ENCODE measurements at regions of chr10 and their contacts with region 1.

Region 1: GRCh38 chr10:130110246-130111112 is at the start of gene C10orf143:
- DNase-seq: peak; percentile 97
- H3K4me3 ChIP-seq: peak within 1 kb of the TSS; percentile 74
- H3K27ac ChIP-seq: peak within 1 kb of the TSS; percentile 95
- H3K4me1 ChIP-seq: peaks cover 8% of the 10 kb centered on the region
- H3K27me3 ChIP-seq: no peaks in the 10 kb centered on the region
- CTCF ChIP-seq: no peak
- total RNA-seq, gene C10orf143: 1.8 and 2.0 TPM in 2 replicates

Region 2: DNA sequence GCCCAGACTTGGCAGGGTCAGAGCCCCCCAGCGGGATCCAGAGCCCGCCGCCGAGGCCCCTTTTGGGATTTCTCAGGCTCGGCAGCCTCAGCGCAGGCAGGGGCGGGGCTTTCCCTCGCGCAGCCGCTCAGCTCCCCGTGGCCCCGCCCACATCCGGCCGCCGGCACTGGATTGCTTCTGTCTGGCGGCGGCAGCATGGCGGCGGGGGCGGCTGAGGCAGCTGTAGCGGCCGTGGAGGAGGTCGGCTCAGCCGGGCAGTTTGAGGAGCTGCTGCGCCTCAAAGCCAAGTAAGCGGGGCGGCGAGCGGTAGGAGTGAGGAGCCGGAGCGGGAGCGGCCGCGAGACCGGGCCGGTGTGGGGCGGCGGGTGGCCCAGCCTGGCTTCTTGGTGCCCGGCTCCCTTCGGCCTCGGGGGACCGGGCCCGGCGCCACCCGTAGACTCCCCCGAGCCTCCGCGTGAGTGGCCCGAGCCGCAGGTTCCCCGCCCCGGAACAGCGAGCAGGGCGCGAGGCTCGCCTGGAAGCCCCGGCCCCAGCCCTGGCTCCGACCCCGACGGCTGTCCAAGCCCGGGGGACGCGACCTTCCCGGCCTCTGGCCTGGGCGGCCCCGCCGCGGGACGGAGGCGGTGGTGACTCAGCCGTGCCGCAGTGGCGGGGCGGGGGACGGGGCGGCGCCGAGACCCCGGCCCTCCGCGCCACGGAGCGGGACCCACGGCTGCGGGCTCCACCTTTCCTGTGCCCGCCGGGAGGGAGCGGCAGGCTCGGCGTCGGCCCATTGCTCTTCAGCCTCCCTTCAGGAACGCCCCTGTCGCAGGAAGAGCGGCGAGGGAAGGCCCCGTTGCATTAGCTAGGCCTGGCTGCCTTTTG is 26.0 kb after region 1 on chr10 and contains the start of gene GLRX3:
- CTCF ChIA-PET with region 1: interaction called, 4 read pairs
- POLR2A ChIA-PET with region 1: no interaction called
- intact Hi-C with region 1: loop called (anchors 1 kb)
- DNase-seq: peak; percentile 92
- H3K4me3 ChIP-seq: peak within 1 kb of the TSS; percentile 99
- H3K27ac ChIP-seq: peak within 1 kb of the TSS; percentile 92
- H3K4me1 ChIP-seq: peaks cover 17% of the 10 kb centered on the region
- H3K27me3 ChIP-seq: no peaks in the 10 kb centered on the region
- CTCF ChIP-seq: no peak
- total RNA-seq, gene GLRX3: 186 and 197 TPM in 2 replicates

Region 3: DNA sequence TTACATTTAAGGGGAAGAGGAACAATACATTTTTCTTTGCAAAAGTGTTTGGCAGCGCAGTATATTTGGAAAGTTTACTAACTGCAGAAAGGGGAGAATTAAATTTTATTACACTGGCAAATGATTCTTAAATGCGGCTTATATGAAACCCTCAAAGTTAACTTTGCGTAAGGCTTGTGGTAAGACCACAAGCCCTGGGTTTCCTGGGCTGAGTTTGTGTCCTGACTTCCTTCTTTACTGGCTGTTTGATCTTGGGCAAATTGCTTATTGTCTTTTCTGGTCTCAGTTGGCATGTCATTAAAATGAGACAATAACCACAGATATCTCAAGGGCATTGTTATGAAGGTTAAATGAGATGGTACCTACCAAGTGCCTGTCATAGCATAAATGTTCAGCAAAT is 132.5 kb after region 1 on chr10:
- CTCF ChIA-PET with region 1: no interaction called
- POLR2A ChIA-PET with region 1: no interaction called
- intact Hi-C with region 1: no loop called
- DNase-seq: no peak
- H3K4me3 ChIP-seq: no peak overlapping the region
- H3K27ac ChIP-seq: no peak overlapping the region
- H3K4me1 ChIP-seq: no peaks in the 10 kb centered on the region
- H3K27me3 ChIP-seq: peaks cover 18% of the 10 kb centered on the region
- CTCF ChIP-seq: no peak

Region 4: DNA sequence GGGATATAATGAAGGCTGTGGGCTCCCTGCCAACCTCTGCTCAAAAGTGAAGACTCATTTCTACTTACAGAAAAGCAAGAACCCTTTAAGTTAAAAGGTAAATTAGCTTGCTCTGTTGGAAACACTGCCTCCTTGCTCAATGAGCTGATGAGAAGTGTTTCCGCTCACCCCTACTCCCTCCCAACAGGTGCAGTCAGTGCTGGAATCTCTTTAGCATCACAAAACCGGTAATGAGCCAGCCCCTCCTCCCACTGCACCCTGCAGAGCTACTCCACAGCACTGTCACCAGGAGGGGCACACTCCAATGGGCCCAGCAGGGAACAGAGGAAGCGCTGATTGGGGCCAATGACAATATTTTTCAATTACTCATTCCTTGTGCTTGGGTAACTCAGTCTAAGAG is 938.5 kb after region 1 on chr10:
- CTCF ChIA-PET with region 1: no interaction called
- POLR2A ChIA-PET with region 1: no interaction called
- intact Hi-C with region 1: loop called (anchors 5 kb)
- DNase-seq: peak; percentile 98
- H3K4me3 ChIP-seq: no peak overlapping the region
- H3K27ac ChIP-seq: peak overlapping the region; percentile 50
- H3K4me1 ChIP-seq: peaks cover 47% of the 10 kb centered on the region
- H3K27me3 ChIP-seq: no peaks in the 10 kb centered on the region
- CTCF ChIP-seq: no peak